ENCODE measurements at regions of chr10 and their contacts with region 1.

Region 1: DNA sequence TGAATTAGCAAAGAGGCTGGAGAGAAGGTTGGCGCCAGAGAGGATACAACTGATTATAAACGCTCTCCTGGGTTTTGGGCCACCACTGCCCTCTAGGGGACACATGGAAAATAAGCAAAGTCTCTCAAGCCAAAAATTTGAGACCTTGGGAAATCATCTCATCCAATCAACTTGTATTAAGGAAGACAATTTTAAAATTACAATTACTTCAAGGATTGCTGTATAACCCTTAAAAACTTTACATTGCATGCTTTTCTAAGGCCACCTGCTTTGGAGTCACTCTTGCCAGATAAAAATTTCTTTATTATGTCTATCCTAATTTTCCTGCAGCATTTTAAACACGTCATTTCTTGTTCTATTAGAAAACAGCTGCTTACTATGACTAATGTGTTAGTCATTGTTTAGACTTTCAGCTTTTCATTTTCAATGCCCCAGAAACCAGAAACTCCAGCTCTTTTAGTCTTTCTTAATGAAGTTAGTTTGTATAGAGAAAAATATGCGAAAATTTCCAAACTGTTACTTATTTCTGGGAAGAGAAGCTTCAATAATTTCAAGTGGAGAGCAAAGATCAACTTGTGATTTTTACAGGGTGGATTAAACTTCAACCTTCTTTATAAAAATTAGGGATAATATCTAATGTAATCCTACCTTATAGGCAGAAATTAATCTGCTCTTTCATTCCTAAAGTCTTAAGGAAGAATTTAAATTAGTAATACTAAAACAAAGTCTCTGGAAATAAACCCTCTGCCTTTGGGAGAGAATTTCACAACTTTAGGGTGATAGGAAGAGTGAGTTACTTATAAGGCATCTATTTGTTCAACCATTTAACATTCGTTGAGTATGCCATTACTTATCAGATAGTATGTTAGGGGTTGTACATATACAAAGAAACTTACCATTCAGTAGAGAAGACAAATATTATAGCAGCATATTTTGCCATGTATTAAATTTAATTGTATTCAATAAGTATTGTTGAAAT is 20.6 kb upstream of the RHOBTB1 start:
- DNase-seq: peak; percentile 49 to 75 (median 71)
- ATAC-seq: peak; percentile 89 to 90
- H3K4me3 ChIP-seq: no peak overlapping the region
- H3K27ac ChIP-seq: no peak overlapping the region
- H3K4me1 ChIP-seq: no peaks in the 10 kb centered on the region
- H3K27me3 ChIP-seq: no peaks in the 10 kb centered on the region

Region 2: GRCh38 chr10:60816628-60817397 is 147.7 kb before region 1 on chr10:
- intact Hi-C with region 1: loop called (anchors 2 to 5 kb)
- DNase-seq: no peak
- ATAC-seq: peak; percentile 92 to 94
- H3K4me3 ChIP-seq: no peak overlapping the region
- H3K27ac ChIP-seq: no peak overlapping the region
- H3K4me1 ChIP-seq: peaks cover 2% of the 10 kb centered on the region
- H3K27me3 ChIP-seq: no peaks in the 10 kb centered on the region

Region 3: GRCh38 chr10:60883187-60883586 is 81.4 kb before region 1 on chr10:
- intact Hi-C with region 1: loop called in 3 of 4 experiments (anchors 5 kb)
- DNase-seq: no peak
- ATAC-seq: peak; percentile 67
- H3K4me3 ChIP-seq: no peak overlapping the region
- H3K27ac ChIP-seq: peak overlapping the region; percentile 26
- H3K4me1 ChIP-seq: peaks cover 6% of the 10 kb centered on the region
- H3K27me3 ChIP-seq: no peaks in the 10 kb centered on the region

Region 4: DNA sequence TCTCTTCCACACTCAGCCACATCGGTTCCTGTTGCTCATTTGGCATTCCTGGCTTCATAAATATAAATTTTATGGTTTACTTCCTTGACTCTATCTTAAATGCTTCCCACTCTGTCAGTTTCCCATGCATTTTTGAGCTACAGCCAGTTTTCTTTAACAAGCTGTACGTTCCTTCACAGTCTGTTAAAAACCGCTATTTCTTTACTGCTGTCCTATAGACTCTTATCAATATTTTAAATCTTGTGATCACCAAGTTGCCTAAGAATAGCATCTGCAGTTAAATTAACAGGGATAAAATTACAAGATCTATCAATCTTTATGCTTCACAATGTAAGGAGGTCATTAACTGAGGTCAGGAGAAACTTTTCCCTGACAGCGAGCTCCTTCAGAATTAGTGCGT is 82.5 kb after region 1 on chr10:
- intact Hi-C with region 1: no loop called
- DNase-seq: no peak
- ATAC-seq: no peak
- H3K4me3 ChIP-seq: no peak overlapping the region
- H3K27ac ChIP-seq: no peak overlapping the region
- H3K4me1 ChIP-seq: no peaks in the 10 kb centered on the region
- H3K27me3 ChIP-seq: no peaks in the 10 kb centered on the region

Measured in right cardiac atrium (tissue), 5 donors.